Activated CD8-positive, alpha-beta T cell treated with anti-CD3 and anti-CD28 coated beads for 36 hours (primary cell): ENCODE measurements at regions of chr15 and their contacts with region 1.

Region 1: GRCh38 chr15:57527382-57528091 is 64.2 kb upstream of the MYZAP start:
- DNase-seq: peak; percentile 5
- ATAC-seq: no peak
- H3K4me3 Mint-ChIP-seq: no peak overlapping the region
- H3K27ac Mint-ChIP-seq: no peak overlapping the region
- H3K4me1 Mint-ChIP-seq: no peaks in the 10 kb centered on the region
- H3K27me3 Mint-ChIP-seq: peaks cover 5% of the 10 kb centered on the region
- CTCF ChIP-seq: peak; percentile 60

Region 2: GRCh38 chr15:57146506-57147201 is 380.9 kb before region 1 on chr15:
- CTCF ChIA-PET with region 1: interaction called, 13 read pairs
- POLR2A ChIA-PET with region 1: no interaction called
- intact Hi-C with region 1: no loop called
- DNase-seq: peak; percentile 16
- ATAC-seq: no peak
- H3K4me3 Mint-ChIP-seq: no peak overlapping the region
- H3K27ac Mint-ChIP-seq: no peak overlapping the region
- H3K4me1 Mint-ChIP-seq: peaks cover 4% of the 10 kb centered on the region
- H3K27me3 Mint-ChIP-seq: no peaks in the 10 kb centered on the region
- CTCF ChIP-seq: peak; percentile 75

Region 3: GRCh38 chr15:57340682-57341259 is 186.8 kb before region 1 on chr15:
- CTCF ChIA-PET with region 1: interaction called, 122 read pairs
- POLR2A ChIA-PET with region 1: no interaction called
- intact Hi-C with region 1: loop called (anchors 5 kb)
- DNase-seq: peak; percentile 47
- ATAC-seq: peak; percentile 42
- H3K4me3 Mint-ChIP-seq: no peak overlapping the region
- H3K27ac Mint-ChIP-seq: no peak overlapping the region
- H3K4me1 Mint-ChIP-seq: no peaks in the 10 kb centered on the region
- H3K27me3 Mint-ChIP-seq: peaks cover 5% of the 10 kb centered on the region
- CTCF ChIP-seq: peak; percentile 86

Region 4: GRCh38 chr15:57348781-57349180 is 178.8 kb before region 1 on chr15:
- CTCF ChIA-PET with region 1: interaction called, 122 read pairs
- POLR2A ChIA-PET with region 1: no interaction called
- intact Hi-C with region 1: loop called (anchors 5 kb)
- DNase-seq: no peak
- ATAC-seq: no peak
- H3K4me3 Mint-ChIP-seq: no peak overlapping the region
- H3K27ac Mint-ChIP-seq: no peak overlapping the region
- H3K4me1 Mint-ChIP-seq: no peaks in the 10 kb centered on the region
- H3K27me3 Mint-ChIP-seq: no peaks in the 10 kb centered on the region
- CTCF ChIP-seq: no peak

Region 5: GRCh38 chr15:57510647-57511046 is 16.9 kb before region 1 on chr15:
- CTCF ChIA-PET with region 1: interaction called, 19 read pairs
- POLR2A ChIA-PET with region 1: no interaction called
- intact Hi-C with region 1: no loop called
- DNase-seq: no peak
- ATAC-seq: no peak
- H3K4me3 Mint-ChIP-seq: no peak overlapping the region
- H3K27ac Mint-ChIP-seq: no peak overlapping the region
- H3K4me1 Mint-ChIP-seq: no peaks in the 10 kb centered on the region
- H3K27me3 Mint-ChIP-seq: no peaks in the 10 kb centered on the region
- CTCF ChIP-seq: no peak

Region 6: GRCh38 chr15:57541805-57542504 is 14.4 kb after region 1 on chr15:
- CTCF ChIA-PET with region 1: interaction called, 34 read pairs
- POLR2A ChIA-PET with region 1: no interaction called
- intact Hi-C with region 1: no loop called
- DNase-seq: peak; percentile 54
- ATAC-seq: no peak
- H3K4me3 Mint-ChIP-seq: no peak overlapping the region
- H3K27ac Mint-ChIP-seq: no peak overlapping the region
- H3K4me1 Mint-ChIP-seq: no peaks in the 10 kb centered on the region
- H3K27me3 Mint-ChIP-seq: peaks cover 7% of the 10 kb centered on the region
- CTCF ChIP-seq: peak; percentile 64